CD4-positive, alpha-beta memory T cell (primary cell): ENCODE measurements at regions of chr9 and their contacts with region 1.

Region 1: GRCh38 chr9:122810306-122810946 is 10.5 kb downstream of the OR1K1 start:
- DNase-seq: peak; percentile 66 to 74 (median 71)
- H3K4me3 ChIP-seq: no peak overlapping the region
- H3K4me3 Mint-ChIP-seq: no peak overlapping the region
- H3K27ac ChIP-seq: no peak overlapping the region
- H3K27ac Mint-ChIP-seq: no peak overlapping the region
- H3K4me1 ChIP-seq: peaks cover 11% of the 10 kb centered on the region
- H3K4me1 Mint-ChIP-seq: peaks cover 9 to 32% (median 22%) of the 10 kb centered on the region in 4 donors
- H3K27me3 ChIP-seq: no peaks in the 10 kb centered on the region
- H3K27me3 Mint-ChIP-seq: no peaks in the 10 kb centered on the region

Region 2: GRCh38 chr9:121545875-121546423 is 1264.5 kb before region 1 on chr9:
- CTCF ChIA-PET with region 1: interaction called, 3 read pairs
- POLR2A ChIA-PET with region 1: no interaction called
- intact Hi-C with region 1: loop called (anchors 5 kb)
- DNase-seq: peak; percentile 25 to 54 (median 41)
- H3K4me3 ChIP-seq: no peak overlapping the region
- H3K4me3 Mint-ChIP-seq: no peak overlapping the region
- H3K27ac ChIP-seq: no peak overlapping the region
- H3K27ac Mint-ChIP-seq: no peak overlapping the region
- H3K4me1 ChIP-seq: peaks cover 10% of the 10 kb centered on the region
- H3K4me1 Mint-ChIP-seq: peaks cover 0 to 5% (median 3%) of the 10 kb centered on the region in 4 donors
- H3K27me3 ChIP-seq: no peaks in the 10 kb centered on the region
- H3K27me3 Mint-ChIP-seq: peaks cover 6 to 9% of the 10 kb centered on the region in 2 donors

Region 3: GRCh38 chr9:122125158-122125508 is 685.3 kb before region 1 on chr9:
- CTCF ChIA-PET with region 1: interaction called, 18 read pairs
- POLR2A ChIA-PET with region 1: no interaction called
- intact Hi-C with region 1: no loop called
- DNase-seq: peak; percentile 65 to 75 (median 68)
- H3K4me3 ChIP-seq: no peak overlapping the region
- H3K4me3 Mint-ChIP-seq: peak overlapping the region in 6 of 8 donors; percentile 42 to 71 (median 60)
- H3K27ac ChIP-seq: no peak overlapping the region
- H3K27ac Mint-ChIP-seq: peak overlapping the region in 1 of 7 donors; percentile 26
- H3K4me1 ChIP-seq: peaks cover 7% of the 10 kb centered on the region
- H3K4me1 Mint-ChIP-seq: peaks cover 11 to 25% (median 18%) of the 10 kb centered on the region in 4 donors
- H3K27me3 ChIP-seq: peaks cover 11% of the 10 kb centered on the region
- H3K27me3 Mint-ChIP-seq: peaks cover 21 to 28% of the 10 kb centered on the region in 2 donors

Region 4: GRCh38 chr9:122464633-122465567 is 345.5 kb before region 1 on chr9:
- CTCF ChIA-PET with region 1: interaction called, 71 read pairs
- POLR2A ChIA-PET with region 1: no interaction called
- intact Hi-C with region 1: loop called (anchors 1 kb)
- DNase-seq: peak; percentile 66 to 70 (median 68)
- H3K4me3 ChIP-seq: peak overlapping the region; percentile 37 to 40
- H3K4me3 Mint-ChIP-seq: peak overlapping the region; percentile 84 to 96 (median 91)
- H3K27ac ChIP-seq: peak overlapping the region; percentile 18
- H3K27ac Mint-ChIP-seq: peak overlapping the region; percentile 66 to 94 (median 92)
- H3K4me1 ChIP-seq: peaks cover 9% of the 10 kb centered on the region
- H3K4me1 Mint-ChIP-seq: peaks cover 7 to 11% (median 9%) of the 10 kb centered on the region in 4 donors
- H3K27me3 ChIP-seq: no peaks in the 10 kb centered on the region
- H3K27me3 Mint-ChIP-seq: peaks cover 30 to 47% of the 10 kb centered on the region in 2 donors

Region 5: DNA sequence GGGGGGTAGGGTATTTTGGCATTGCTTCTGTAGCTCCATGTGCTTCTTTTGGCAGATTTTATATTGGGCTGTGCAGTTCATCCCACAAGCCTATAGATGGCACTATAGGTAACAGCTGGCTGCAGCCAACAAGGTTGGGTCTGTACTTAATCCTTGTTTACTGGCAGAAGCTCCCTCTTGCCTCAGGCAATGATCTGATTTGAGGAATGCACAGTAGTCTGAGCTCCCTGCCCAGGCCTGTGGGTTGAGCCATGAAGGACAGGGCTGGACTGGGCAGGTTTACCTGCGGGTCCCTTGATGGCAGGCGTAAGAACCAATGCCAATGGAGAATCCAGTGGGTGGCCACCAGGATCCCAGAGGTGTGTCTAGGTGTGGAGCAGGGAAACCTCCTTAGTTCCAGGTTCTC is 311.5 kb before region 1 on chr9:
- CTCF ChIA-PET with region 1: interaction called, 25 read pairs
- POLR2A ChIA-PET with region 1: no interaction called
- intact Hi-C with region 1: loop called (anchors 1 kb)
- DNase-seq: peak in 4 of 5 donors; percentile 3 to 26 (median 16)
- H3K4me3 ChIP-seq: no peak overlapping the region
- H3K4me3 Mint-ChIP-seq: no peak overlapping the region
- H3K27ac ChIP-seq: no peak overlapping the region
- H3K27ac Mint-ChIP-seq: no peak overlapping the region
- H3K4me1 ChIP-seq: no peaks in the 10 kb centered on the region
- H3K4me1 Mint-ChIP-seq: no peaks in the 10 kb centered on the region
- H3K27me3 ChIP-seq: no peaks in the 10 kb centered on the region
- H3K27me3 Mint-ChIP-seq: peaks cover 8 to 25% of the 10 kb centered on the region in 2 donors

Region 6: DNA sequence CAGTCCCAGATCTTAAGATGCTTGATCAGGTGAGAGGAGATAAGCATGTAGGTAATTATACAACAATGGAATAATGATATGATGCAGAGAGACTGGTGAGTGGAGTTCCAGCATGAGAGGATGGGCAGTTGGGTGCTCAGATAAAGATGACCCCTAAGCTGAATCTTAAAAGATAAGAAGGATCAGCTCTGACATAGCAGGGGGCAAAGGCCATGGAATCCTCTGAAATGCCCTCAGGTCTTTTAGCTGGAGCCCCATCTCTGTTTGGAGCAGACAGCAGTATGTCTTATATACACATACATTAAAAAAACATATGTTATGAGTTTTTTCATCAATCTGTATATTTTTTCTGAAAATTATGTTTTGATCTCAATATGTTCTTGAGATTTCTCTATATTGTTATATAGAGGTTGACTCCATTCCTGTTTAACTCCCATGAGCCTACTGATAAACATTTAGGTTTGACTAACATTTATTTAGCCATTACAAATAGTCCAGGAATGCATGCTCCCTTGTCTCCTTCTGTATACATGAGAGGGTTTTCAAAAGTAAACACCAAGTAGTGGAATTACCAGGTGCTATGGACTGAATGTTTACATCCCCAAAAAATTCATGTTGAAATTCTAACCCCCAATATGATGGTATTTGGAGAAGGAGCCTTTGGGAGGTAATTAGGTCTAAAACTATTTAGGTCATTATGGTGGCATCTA is 25.3 kb before region 1 on chr9:
- CTCF ChIA-PET with region 1: no interaction called
- POLR2A ChIA-PET with region 1: no interaction called
- intact Hi-C with region 1: no loop called
- DNase-seq: no peak
- H3K4me3 ChIP-seq: no peak overlapping the region
- H3K4me3 Mint-ChIP-seq: no peak overlapping the region
- H3K27ac ChIP-seq: no peak overlapping the region
- H3K27ac Mint-ChIP-seq: no peak overlapping the region
- H3K4me1 ChIP-seq: no peaks in the 10 kb centered on the region
- H3K4me1 Mint-ChIP-seq: no peaks in the 10 kb centered on the region
- H3K27me3 ChIP-seq: no peaks in the 10 kb centered on the region
- H3K27me3 Mint-ChIP-seq: no peaks in the 10 kb centered on the region